ENCODE measurements at regions of chr20 and their contacts with region 1.

Region 1: DNA sequence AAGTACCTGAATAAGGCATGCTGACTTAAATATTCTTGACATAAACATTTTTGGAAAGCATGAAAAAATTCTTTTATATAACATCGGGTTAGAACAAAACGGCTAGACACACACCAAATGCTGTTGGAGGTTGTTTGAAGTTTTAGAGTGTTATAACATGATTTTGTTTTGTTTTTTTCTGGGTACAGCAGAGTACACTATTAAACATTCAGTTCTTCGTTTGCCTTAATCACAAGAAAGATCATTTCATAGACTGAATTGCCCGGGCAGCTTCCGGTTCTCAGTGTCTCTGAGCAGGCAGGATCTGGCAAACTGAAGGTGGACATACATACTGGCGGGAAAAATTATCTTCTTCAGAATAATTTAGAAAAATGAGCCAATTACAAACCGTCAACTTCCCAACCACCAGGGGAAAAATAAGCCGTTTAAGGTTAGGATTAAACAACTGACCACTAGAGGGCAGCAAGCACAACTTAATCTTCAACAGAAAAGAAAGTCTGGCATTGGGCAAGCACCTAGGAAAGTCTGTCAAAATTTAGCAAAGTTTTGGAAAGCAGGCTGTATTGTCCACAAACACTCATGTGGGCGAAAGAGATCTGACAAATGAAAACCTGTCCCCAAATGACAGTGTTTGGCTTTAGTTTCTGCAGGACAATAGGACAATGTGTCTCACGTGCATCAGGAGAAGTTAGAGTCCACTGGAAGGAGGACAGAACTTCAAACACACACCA is 15.0 kb downstream of the ZNF217 start:
- DNase-seq: peak; percentile 47 to 95
- H3K4me3 ChIP-seq: peak overlapping the region in 2 of 4 donors; percentile 22 to 34
- H3K27ac ChIP-seq: peak overlapping the region; percentile 43 to 100 (median 80)
- H3K4me1 ChIP-seq: peaks cover 36 to 87% (median 61%) of the 10 kb centered on the region in 4 donors
- H3K27me3 ChIP-seq: no peaks in the 10 kb centered on the region
- CTCF ChIP-seq: peak in 5 of 7 experiments; percentile 56 to 95 (median 92)
- EP300 ChIP-seq: no peak
- POLR2A ChIP-seq: no peak

Region 2: GRCh38 chr20:53245574-53245973 is 333.1 kb before region 1 on chr20:
- intact Hi-C with region 1: no loop called
- DNase-seq: no peak
- H3K4me3 ChIP-seq: no peak overlapping the region
- H3K27ac ChIP-seq: no peak overlapping the region
- H3K4me1 ChIP-seq: no peaks in the 10 kb centered on the region
- H3K27me3 ChIP-seq: no peaks in the 10 kb centered on the region
- CTCF ChIP-seq: no peak
- EP300 ChIP-seq: no peak
- POLR2A ChIP-seq: no peak

Region 3: DNA sequence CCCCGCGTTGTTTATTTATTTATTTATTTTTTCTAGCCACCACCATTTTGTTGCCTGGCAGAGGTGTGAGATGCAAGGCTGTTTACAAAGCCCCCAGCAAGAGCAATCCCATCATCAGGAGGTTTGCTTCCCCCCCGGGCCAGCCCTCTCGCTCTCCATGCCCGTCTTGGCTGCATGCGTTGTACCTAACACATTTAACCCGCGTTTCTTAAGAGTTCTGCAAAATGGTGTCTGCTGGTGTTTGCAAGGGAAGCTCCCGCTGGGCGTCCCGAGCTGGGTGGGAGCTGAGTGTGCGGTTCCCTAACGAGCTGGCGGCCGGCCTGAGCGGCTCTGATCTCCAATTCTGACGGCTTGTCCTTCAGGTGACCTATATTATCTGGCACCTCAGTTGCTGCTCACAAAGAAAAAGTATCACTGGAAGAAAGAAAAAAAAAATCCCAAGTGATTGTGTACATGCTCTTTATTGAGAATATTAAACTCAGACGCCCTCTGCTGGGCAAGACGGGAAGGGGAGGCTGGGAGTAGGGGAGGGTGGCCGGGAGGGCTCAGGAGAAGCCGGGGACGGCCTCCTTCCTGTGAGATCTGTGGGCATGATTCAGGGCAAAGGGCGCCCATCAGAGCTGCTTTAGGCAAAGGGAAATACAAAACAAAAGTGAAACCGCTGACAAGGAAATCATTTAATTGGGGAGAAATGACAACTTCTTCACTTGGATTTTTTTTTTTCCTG is 337.0 kb after region 1 on chr20:
- intact Hi-C with region 1: loop called (anchors 10 kb)
- DNase-seq: peak; percentile 96 to 97
- H3K4me3 ChIP-seq: peak overlapping the region; percentile 54 to 68 (median 58)
- H3K27ac ChIP-seq: peak overlapping the region; percentile 83 to 89 (median 88)
- H3K4me1 ChIP-seq: peaks cover 15 to 39% (median 31%) of the 10 kb centered on the region in 4 donors
- H3K27me3 ChIP-seq: no peaks in the 10 kb centered on the region
- CTCF ChIP-seq: peak in 6 of 7 experiments; percentile 62 to 96 (median 93)
- EP300 ChIP-seq: no peak
- POLR2A ChIP-seq: no peak

Region 4: DNA sequence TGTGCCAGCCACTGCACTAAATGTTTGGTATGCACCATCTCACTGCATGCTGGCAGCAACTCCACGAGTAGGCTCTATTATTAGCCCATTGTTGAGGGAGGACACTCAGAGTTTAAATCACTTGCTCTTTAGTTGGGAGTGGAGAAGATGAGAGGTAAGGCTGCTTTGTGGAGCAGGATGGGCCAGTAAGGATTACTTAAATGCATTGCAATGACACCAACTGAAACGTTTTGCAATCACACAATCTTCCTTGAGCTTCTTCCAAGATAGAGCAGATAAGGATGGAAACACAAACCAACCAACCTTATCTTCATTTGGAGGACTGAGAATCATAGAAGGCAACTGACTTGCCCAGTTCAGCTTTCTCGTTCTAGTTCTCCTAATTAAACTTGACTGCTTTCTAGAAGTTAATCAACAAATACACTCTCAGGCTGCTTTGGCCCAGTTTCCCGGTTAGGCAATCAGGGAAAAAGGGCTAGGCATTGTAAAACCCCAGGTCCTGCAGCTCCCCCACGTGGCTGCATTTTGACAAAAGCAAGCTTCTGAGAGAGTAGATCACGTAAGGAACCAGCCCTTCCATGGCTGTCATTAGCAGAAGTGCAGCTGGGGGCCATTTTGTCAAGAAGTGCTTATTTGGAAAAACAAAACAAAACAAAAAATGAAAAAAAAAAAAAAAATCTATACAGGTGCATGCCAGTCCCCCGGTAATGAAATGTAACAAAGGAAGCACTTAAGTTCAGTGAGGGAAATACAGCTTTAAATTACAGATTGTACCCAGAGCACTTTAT is 361.1 kb after region 1 on chr20:
- intact Hi-C with region 1: loop called (anchors 10 kb)
- DNase-seq: peak; percentile 93 to 95
- H3K4me3 ChIP-seq: no peak overlapping the region
- H3K27ac ChIP-seq: peak overlapping the region in 4 of 5 donors; percentile 43 to 68 (median 64)
- H3K4me1 ChIP-seq: peaks cover 13 to 70% (median 32%) of the 10 kb centered on the region in 4 donors
- H3K27me3 ChIP-seq: no peaks in the 10 kb centered on the region
- CTCF ChIP-seq: peak in 5 of 7 experiments; percentile 33 to 76 (median 72)
- EP300 ChIP-seq: no peak
- POLR2A ChIP-seq: no peak

Region 5: GRCh38 chr20:54267510-54268003 is 688.9 kb after region 1 on chr20:
- intact Hi-C with region 1: no loop called
- DNase-seq: peak; percentile 26 to 58
- H3K4me3 ChIP-seq: no peak overlapping the region
- H3K27ac ChIP-seq: no peak overlapping the region
- H3K4me1 ChIP-seq: no peaks in the 10 kb centered on the region
- H3K27me3 ChIP-seq: no peaks in the 10 kb centered on the region
- CTCF ChIP-seq: no peak
- EP300 ChIP-seq: no peak
- POLR2A ChIP-seq: no peak